ENCODE measurements at regions of chr12 and their contacts with region 1.

Region 1: GRCh38 chr12:127536833-127537428 is 730.0 kb upstream of the TMEM132C start:
- DNase-seq: no peak
- H3K4me3 Mint-ChIP-seq: no peak overlapping the region
- H3K27ac Mint-ChIP-seq: no peak overlapping the region
- H3K4me1 Mint-ChIP-seq: no peaks in the 10 kb centered on the region
- H3K27me3 Mint-ChIP-seq: no peaks in the 10 kb centered on the region
- CTCF ChIP-seq: no peak

Region 2: GRCh38 chr12:127509066-127509778 is 27.7 kb before region 1 on chr12:
- CTCF ChIA-PET with region 1: no interaction called
- intact Hi-C with region 1: loop called (anchors 1 kb)
- DNase-seq: no peak
- H3K4me3 Mint-ChIP-seq: no peak overlapping the region
- H3K27ac Mint-ChIP-seq: no peak overlapping the region
- H3K4me1 Mint-ChIP-seq: no peaks in the 10 kb centered on the region
- H3K27me3 Mint-ChIP-seq: no peaks in the 10 kb centered on the region
- CTCF ChIP-seq: no peak